ENCODE measurements at regions of chr13 and their contacts with region 1.

Region 1: GRCh38 chr13:36346222-36347083 is at the start of gene SPART:
- DNase-seq: peak; percentile 92
- H3K4me3 Mint-ChIP-seq: peak within 1 kb of the TSS; percentile 81
- H3K27ac Mint-ChIP-seq: peak within 1 kb of the TSS; percentile 91
- H3K4me1 Mint-ChIP-seq: peaks cover 38% of the 10 kb centered on the region
- H3K27me3 Mint-ChIP-seq: no peaks in the 10 kb centered on the region
- total RNA-seq, gene SPART: 22.4 to 22.5 TPM

Region 2: DNA sequence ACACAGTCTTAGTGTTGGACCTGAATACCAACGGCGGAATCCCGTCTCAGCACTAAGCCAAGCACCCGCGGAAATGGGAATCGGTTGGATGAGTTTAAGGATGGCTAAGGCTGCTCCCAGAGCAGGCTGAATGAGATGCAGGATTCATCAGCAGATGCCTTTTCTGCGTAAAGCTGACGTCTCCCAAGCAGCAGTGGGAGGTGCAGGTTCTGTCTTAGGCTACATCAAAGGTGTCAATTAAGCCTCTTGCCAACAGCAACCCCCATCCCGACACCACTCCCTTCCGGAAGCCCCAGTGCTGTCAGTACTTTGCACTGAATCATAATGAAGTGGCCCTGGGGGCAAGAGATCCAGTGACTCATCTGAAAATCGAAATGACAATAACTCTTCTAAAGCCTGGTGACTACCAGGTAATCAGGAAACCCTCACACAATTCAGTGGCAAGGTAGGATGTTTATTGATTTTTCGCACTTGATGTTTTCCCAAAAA is 490.9 kb before region 1 on chr13:
- CTCF ChIA-PET with region 1: no interaction called
- POLR2A ChIA-PET with region 1: no interaction called
- intact Hi-C with region 1: no loop called
- DNase-seq: peak; percentile 21
- H3K4me3 Mint-ChIP-seq: no peak overlapping the region
- H3K27ac Mint-ChIP-seq: no peak overlapping the region
- H3K4me1 Mint-ChIP-seq: no peaks in the 10 kb centered on the region
- H3K27me3 Mint-ChIP-seq: peaks cover 23% of the 10 kb centered on the region

Region 3: DNA sequence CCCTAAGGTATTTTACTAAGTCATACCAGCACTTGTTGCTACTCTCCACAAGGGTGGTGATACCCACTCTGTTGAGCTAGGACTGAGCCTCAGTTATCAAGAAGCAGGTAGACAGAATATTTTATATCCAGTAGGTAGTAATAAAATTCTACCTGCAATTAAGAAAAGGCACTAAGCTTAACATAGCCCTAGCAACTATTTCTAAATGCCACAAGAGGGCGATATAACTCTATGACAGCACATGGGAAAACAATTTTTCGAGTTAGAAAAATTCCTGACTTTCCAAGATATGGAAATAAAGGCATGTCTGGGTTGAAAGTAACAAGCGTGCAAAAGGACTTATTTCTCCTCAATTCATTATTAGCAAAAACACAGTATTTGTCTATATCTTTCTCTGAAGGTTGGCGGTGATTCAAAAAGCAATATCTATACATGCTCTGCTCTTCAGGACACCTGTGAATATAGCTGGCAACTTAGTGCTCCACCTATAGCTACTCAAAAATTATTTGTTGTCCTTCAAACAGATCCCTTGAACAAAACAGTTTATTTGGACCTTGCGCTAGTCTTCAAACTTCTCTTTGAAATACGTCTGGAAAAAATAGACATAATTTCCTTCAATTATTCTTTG is 63.5 kb before region 1 on chr13:
- CTCF ChIA-PET with region 1: interaction called, 7 read pairs
- POLR2A ChIA-PET with region 1: interaction called, 3 read pairs
- intact Hi-C with region 1: loop called (anchors 2 kb)
- DNase-seq: no peak
- H3K4me3 Mint-ChIP-seq: no peak overlapping the region
- H3K27ac Mint-ChIP-seq: no peak overlapping the region
- H3K4me1 Mint-ChIP-seq: no peaks in the 10 kb centered on the region
- H3K27me3 Mint-ChIP-seq: peaks cover 4% of the 10 kb centered on the region

Region 4: GRCh38 chr13:36306072-36306471 is 40.4 kb before region 1 on chr13:
- CTCF ChIA-PET with region 1: no interaction called
- POLR2A ChIA-PET with region 1: no interaction called
- intact Hi-C with region 1: no loop called
- DNase-seq: no peak
- H3K4me3 Mint-ChIP-seq: no peak overlapping the region
- H3K27ac Mint-ChIP-seq: no peak overlapping the region
- H3K4me1 Mint-ChIP-seq: no peaks in the 10 kb centered on the region
- H3K27me3 Mint-ChIP-seq: no peaks in the 10 kb centered on the region

Region 5: DNA sequence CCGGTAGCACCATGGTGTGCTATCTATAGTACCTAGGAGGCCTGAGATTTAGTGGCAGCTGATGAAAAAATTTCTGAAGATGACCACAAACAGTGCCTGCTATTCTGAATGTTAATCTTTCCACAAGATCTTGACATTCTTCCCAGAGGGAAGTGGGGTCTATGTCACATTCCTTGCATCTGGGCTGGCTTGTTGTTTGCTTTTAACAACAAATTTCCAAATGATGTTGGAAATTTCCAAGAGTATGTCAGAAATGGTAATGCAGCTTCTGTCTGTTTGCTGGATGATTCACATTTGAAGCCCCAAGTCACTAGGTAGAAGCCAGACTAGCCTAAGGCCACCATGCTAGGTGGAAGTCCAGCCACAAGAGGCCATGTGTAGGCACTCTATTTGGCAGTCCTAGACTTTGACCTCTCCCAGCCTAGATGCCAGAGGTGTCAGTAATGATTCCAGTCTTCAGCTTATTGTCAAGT is 22.4 kb before region 1 on chr13:
- CTCF ChIA-PET with region 1: no interaction called
- POLR2A ChIA-PET with region 1: no interaction called
- intact Hi-C with region 1: no loop called
- DNase-seq: no peak
- H3K4me3 Mint-ChIP-seq: no peak overlapping the region
- H3K27ac Mint-ChIP-seq: no peak overlapping the region
- H3K4me1 Mint-ChIP-seq: no peaks in the 10 kb centered on the region
- H3K27me3 Mint-ChIP-seq: no peaks in the 10 kb centered on the region

Region 6: GRCh38 chr13:36382030-36382429 is 35.6 kb after region 1 on chr13:
- CTCF ChIA-PET with region 1: interaction called, 5 read pairs
- POLR2A ChIA-PET with region 1: no interaction called
- intact Hi-C with region 1: loop called (anchors 1 kb)
- DNase-seq: no peak
- H3K4me3 Mint-ChIP-seq: no peak overlapping the region
- H3K27ac Mint-ChIP-seq: no peak overlapping the region
- H3K4me1 Mint-ChIP-seq: no peaks in the 10 kb centered on the region
- H3K27me3 Mint-ChIP-seq: peaks cover 6% of the 10 kb centered on the region

Region 7: DNA sequence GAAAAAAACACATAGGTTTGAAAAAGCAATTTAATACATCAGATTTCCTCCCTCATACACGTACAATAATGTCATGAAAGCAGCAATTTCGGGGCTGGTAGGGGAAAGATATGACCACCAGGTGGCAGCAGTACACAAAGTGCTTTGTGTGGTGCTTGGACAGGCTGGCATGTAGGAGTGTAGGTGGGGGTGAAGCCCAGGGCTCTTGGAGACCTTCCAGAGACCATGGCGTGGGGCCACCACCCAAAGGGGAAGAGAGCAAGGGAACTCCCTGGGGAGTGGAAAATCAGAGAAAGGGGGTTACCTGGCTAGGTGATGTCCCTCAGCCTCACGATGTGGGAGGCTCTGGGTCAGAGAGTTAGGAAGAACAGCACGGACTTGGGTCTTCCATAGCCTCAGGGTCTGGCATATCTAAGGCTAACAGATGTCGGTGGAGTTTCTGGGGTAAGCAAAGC is 74.0 kb after region 1 on chr13:
- CTCF ChIA-PET with region 1: interaction called, 9 read pairs
- POLR2A ChIA-PET with region 1: no interaction called
- intact Hi-C with region 1: loop called (anchors 1 kb)
- DNase-seq: peak; percentile 79
- H3K4me3 Mint-ChIP-seq: no peak overlapping the region
- H3K27ac Mint-ChIP-seq: peak overlapping the region; percentile 21
- H3K4me1 Mint-ChIP-seq: peaks cover 21% of the 10 kb centered on the region
- H3K27me3 Mint-ChIP-seq: peaks cover 43% of the 10 kb centered on the region

Region 8: DNA sequence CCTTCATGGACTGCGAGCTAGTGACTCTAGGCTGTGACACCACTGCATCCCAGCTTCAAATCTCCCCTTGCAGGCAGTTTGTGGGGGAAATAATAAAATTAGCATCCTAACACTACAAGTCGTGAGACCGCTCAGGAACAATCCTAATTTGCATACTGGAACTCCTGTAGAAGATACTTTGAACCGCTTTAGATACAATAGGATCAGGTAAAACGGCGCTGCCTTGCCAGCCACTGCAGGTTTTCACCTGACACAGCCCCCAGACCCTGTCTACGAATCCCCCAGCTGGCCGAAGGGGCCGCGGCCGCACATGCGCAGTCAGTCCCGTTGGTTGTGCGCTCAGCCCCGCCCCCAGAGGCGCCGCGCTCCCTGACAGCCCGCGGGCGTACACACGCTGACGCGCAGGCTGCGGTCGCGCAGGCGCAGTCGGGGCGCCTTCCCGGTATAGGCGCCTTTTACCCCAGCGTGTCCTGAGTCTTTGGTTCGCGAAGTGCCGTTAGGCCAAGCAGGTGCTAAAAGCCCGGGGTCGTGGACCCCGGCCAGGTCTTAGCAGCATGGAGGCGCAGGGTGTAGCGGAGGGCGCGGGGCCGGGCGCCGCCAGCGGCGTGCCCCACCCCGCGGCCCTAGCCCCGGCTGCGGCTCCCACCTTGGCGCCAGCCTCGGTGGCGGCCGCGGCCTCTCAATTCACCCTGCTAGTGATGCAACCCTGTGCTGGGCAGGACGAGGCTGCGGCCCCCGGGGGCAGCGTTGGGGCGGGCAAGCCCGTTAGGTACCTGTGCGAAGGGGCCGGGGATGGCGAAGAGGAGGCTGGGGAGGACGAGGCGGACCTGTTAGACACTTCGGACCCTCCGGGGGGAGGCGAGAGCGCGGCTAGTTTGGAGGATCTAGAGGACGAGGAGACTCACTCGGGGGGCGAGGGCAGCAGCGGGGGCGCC is 472.6 kb after region 1 on chr13 and contains the start of gene RFXAP:
- CTCF ChIA-PET with region 1: interaction called, 3 read pairs
- POLR2A ChIA-PET with region 1: no interaction called
- intact Hi-C with region 1: loop called (anchors 1 kb)
- DNase-seq: peak; percentile 92
- H3K4me3 Mint-ChIP-seq: peak within 1 kb of the TSS; percentile 91
- H3K27ac Mint-ChIP-seq: peak within 1 kb of the TSS; percentile 82
- H3K4me1 Mint-ChIP-seq: peaks cover 42% of the 10 kb centered on the region
- H3K27me3 Mint-ChIP-seq: peaks cover 7% of the 10 kb centered on the region
- total RNA-seq, gene RFXAP: 10.0 to 13.0 TPM

Region 9: DNA sequence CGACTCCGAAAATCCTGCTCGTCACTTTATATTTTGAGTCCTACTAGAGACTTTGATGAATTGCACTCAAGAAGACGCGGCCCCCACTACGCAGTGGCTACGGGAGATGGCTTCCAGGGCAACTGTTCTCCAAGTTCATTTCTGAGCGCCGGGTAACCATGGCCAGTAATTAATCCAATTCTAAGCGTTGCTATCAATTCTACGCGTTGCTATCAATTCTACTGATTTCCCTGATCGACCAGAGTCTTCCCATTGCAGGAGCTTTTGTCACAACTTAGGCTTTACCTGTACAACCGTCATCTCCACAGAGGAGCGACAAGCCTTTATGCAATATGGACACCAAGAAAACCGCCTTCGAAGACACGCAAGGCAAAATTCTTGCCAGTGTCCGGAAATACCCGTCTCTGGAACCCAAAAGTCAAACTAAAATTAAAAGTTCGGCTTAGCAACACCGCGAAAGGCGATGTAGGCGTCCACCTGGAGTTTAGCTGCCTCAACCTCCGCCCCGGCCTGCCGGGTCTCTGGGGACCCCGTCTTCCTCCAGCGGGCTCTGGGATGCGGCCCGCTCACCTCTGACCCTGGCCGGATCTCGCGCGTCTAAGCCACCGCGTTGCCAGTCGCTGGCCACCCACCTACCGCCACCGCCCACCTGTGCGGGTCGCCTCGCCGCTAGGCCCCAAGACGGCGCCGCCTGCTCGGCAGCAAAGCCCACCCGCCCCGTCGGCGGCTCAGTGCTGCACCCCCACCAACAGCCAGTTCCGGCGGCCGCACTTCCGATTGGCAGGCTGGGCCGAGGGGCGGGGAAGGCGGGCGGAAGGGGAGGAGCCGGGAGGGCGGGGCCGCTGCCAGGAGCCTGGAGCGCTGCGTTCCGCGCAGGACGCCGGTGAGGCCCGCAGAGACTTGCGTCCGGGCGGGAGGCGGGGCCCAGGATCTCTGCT is 712.7 kb after region 1 on chr13 and contains the start of gene SUPT20H:
- CTCF ChIA-PET with region 1: no interaction called
- POLR2A ChIA-PET with region 1: no interaction called
- intact Hi-C with region 1: loop called (anchors 2 kb)
- DNase-seq: peak; percentile 96
- H3K4me3 Mint-ChIP-seq: peak within 1 kb of the TSS; percentile 89
- H3K27ac Mint-ChIP-seq: peak within 1 kb of the TSS; percentile 94
- H3K4me1 Mint-ChIP-seq: peaks cover 30% of the 10 kb centered on the region
- H3K27me3 Mint-ChIP-seq: no peaks in the 10 kb centered on the region
- total RNA-seq, gene SUPT20H: 56.8 TPM

Measured in activated CD4-positive, alpha-beta memory T cell treated with anti-CD3 and anti-CD28 coated beads for 36 hours (primary cell).